Calu3 (cell line): ENCODE measurements at regions of chr1 and their contacts with region 1.

Region 1: GRCh38 chr1:22488319-22488718 is 36.7 kb downstream of the ZBTB40 start:
- DNase-seq: no peak
- H3K4me3 Mint-ChIP-seq: no peak overlapping the region
- H3K27ac Mint-ChIP-seq: no peak overlapping the region
- H3K4me1 Mint-ChIP-seq: no peaks in the 10 kb centered on the region
- H3K27me3 Mint-ChIP-seq: no peaks in the 10 kb centered on the region
- CTCF ChIP-seq: no peak

Region 2: DNA sequence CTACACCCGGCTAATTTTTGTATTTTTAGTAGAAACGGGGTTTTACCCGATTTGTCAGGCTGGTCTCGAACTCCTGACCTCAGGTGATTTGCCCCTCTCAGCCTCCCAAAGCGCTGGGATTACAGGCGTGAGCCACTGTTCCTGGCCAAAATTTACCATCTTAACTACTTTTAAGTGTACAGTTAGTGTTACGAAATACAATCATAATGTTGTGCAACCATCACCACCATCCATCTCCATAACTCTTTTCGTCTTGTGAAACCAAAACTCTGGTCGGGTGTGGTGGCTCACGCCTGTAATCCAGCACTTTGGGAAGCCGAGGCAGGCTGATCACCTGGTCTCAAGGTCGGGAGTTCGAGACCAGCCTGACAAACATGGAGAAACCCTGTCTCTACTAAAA is 50.7 kb before region 1 on chr1:
- CTCF ChIA-PET with region 1: no interaction called
- intact Hi-C with region 1: loop called (anchors 10 kb)
- DNase-seq: no peak
- H3K4me3 Mint-ChIP-seq: no peak overlapping the region
- H3K27ac Mint-ChIP-seq: no peak overlapping the region
- H3K4me1 Mint-ChIP-seq: no peaks in the 10 kb centered on the region
- H3K27me3 Mint-ChIP-seq: no peaks in the 10 kb centered on the region
- CTCF ChIP-seq: no peak